Dorsolateral prefrontal cortex (tissue), 120 donors: ENCODE measurements at regions of chr14 and their contacts with region 1.

Region 1: GRCh38 chr14:77320238-77320935 is at the start of gene POMT2:
- DNase-seq: peak; percentile 92 to 98 (median 96)
- H3K4me3 ChIP-seq: peak within 1 kb of the TSS; percentile 81 to 100 (median 96)
- H3K27ac ChIP-seq: peak within 1 kb of the TSS; percentile 91 to 100 (median 99)
- H3K27me3 ChIP-seq: no peaks in the 10 kb centered on the region
- CTCF ChIP-seq: peak in 54 of 56 donors; percentile 8 to 74 (median 50)
- total RNA-seq, gene POMT2: 25.0 to 76.5 (median 44.0) TPM

Region 2: GRCh38 chr14:77158175-77158891 is 162.1 kb before region 1 on chr14:
- intact Hi-C with region 1: loop called (anchors 5 kb)
- DNase-seq: peak; percentile 56 to 94 (median 89)
- H3K4me3 ChIP-seq: peak overlapping the region in 39 of 59 donors; percentile 7 to 54 (median 29)
- H3K27ac ChIP-seq: peak overlapping the region; percentile 35 to 93 (median 84)
- H3K27me3 ChIP-seq: no peaks in the 10 kb centered on the region
- CTCF ChIP-seq: peak in 32 of 56 donors; percentile 2 to 57 (median 30)

Region 3: GRCh38 chr14:77306851-77307765 is 13.3 kb before region 1 on chr14:
- intact Hi-C with region 1: loop called in 1 of 2 experiments (anchors 1 kb)
- DNase-seq: peak in 8 of 10 donors; percentile 69 to 82 (median 76)
- H3K4me3 ChIP-seq: peak overlapping the region in 43 of 59 donors; percentile 2 to 56 (median 25)
- H3K27ac ChIP-seq: peak overlapping the region; percentile 92 to 100 (median 99)
- H3K27me3 ChIP-seq: no peaks in the 10 kb centered on the region
- CTCF ChIP-seq: no peak

Region 4: DNA sequence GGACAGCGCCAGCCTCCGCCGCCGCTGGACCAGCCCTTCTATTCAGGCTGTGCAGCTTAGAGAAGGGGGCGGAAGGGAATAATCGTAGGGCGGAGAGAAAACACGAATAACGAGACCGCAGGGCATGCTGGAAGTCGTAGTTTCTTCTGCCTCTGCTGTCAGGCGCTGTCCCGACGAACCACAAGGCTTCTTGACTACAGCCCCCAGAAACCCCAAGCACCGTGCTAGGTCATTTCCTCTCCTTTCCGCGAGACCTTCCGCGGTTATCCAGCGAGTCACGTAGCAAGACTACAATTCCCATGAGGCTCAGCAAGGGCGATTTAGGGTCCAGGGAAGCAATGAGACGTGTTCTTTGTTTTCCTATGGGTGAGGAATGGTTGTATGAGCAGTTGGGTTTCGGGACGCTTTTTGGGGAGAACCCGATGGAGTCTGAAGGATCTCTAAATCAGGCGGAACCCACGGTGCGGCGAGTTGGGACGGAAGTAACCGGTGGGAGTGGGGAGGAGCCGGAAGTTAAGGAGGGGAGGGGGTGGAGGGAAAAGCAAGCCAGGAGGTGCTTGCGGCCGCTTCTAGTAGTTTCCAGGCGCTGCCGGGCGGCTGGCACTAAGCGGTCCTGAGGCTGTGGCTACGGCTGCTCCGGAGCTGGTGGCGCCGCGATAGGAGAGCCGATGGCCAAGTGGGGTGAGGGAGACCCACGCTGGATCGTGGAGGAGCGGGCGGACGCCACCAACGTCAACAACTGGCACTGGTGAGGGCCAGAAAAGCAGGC is 137.3 kb after region 1 on chr14 and contains the starts of genes AHSA1 and VIPAS39:
- intact Hi-C with region 1: loop called (anchors 2 to 5 kb)
- DNase-seq: peak; percentile 86 to 99 (median 98)
- H3K4me3 ChIP-seq: peak within 1 kb of the TSS; percentile 66 to 100 (median 98)
- H3K27ac ChIP-seq: peak within 1 kb of the TSS; percentile 80 to 100 (median 99)
- H3K27me3 ChIP-seq: no peaks in the 10 kb centered on the region
- CTCF ChIP-seq: peak in 27 of 56 donors; percentile 4 to 53 (median 18)
- total RNA-seq, gene AHSA1: 95.6 to 479 (median 192) TPM
- total RNA-seq, gene VIPAS39: 13.2 to 25.2 (median 19.5) TPM

Region 5: GRCh38 chr14:77547512-77548180 is 227.3 kb after region 1 on chr14:
- intact Hi-C with region 1: loop called (anchors 5 to 10 kb)
- DNase-seq: no peak
- H3K4me3 ChIP-seq: no peak overlapping the region
- H3K27ac ChIP-seq: peak overlapping the region in 1 of 59 donors; percentile 10
- H3K27me3 ChIP-seq: no peaks in the 10 kb centered on the region
- CTCF ChIP-seq: no peak